Gastrocnemius medialis (tissue), 4 donors: ENCODE measurements at regions of chr6 and their contacts with region 1.

Region 1: GRCh38 chr6:26285143-26286134 is 79.6 kb upstream of the BTN3A2 start:
- DNase-seq: peak; percentile 96
- ATAC-seq: peak; percentile 91 to 92
- H3K4me3 ChIP-seq: peak overlapping the region; percentile 50 to 84 (median 73)
- H3K27ac ChIP-seq: peak overlapping the region; percentile 91 to 92 (median 92)
- H3K4me1 ChIP-seq: peaks cover 17 to 28% of the 10 kb centered on the region in 2 donors
- H3K27me3 ChIP-seq: no peaks in the 10 kb centered on the region
- CTCF ChIP-seq: no peak
- POLR2A ChIP-seq: peak; percentile 66 to 72

Region 2: GRCh38 chr6:26054857-26055669 is 230.4 kb before region 1 on chr6:
- in situ Hi-C with region 1: no loop called
- intact Hi-C with region 1: loop called (anchors 2 kb)
- DNase-seq: peak; percentile 84 to 86
- ATAC-seq: peak; percentile 76 to 80
- H3K4me3 ChIP-seq: peak overlapping the region; percentile 73 to 87 (median 82)
- H3K27ac ChIP-seq: peak overlapping the region; percentile 87 to 96 (median 90)
- H3K4me1 ChIP-seq: peaks cover 11 to 15% of the 10 kb centered on the region in 2 donors
- H3K27me3 ChIP-seq: no peaks in the 10 kb centered on the region
- CTCF ChIP-seq: peak in 2 of 5 experiments; percentile 14 to 29
- POLR2A ChIP-seq: peak in 1 of 2 donors; percentile 21

Region 3: GRCh38 chr6:26156076-26156849 is 129.2 kb before region 1 on chr6:
- in situ Hi-C with region 1: no loop called
- intact Hi-C with region 1: loop called (anchors 1 kb)
- DNase-seq: peak; percentile 81 to 89
- ATAC-seq: peak; percentile 70 to 76
- H3K4me3 ChIP-seq: peak overlapping the region; percentile 71 to 95 (median 77)
- H3K27ac ChIP-seq: peak overlapping the region; percentile 88 to 97 (median 93)
- H3K4me1 ChIP-seq: peaks cover 11 to 23% of the 10 kb centered on the region in 2 donors
- H3K27me3 ChIP-seq: no peaks in the 10 kb centered on the region
- CTCF ChIP-seq: no peak
- POLR2A ChIP-seq: peak; percentile 99

Region 4: DNA sequence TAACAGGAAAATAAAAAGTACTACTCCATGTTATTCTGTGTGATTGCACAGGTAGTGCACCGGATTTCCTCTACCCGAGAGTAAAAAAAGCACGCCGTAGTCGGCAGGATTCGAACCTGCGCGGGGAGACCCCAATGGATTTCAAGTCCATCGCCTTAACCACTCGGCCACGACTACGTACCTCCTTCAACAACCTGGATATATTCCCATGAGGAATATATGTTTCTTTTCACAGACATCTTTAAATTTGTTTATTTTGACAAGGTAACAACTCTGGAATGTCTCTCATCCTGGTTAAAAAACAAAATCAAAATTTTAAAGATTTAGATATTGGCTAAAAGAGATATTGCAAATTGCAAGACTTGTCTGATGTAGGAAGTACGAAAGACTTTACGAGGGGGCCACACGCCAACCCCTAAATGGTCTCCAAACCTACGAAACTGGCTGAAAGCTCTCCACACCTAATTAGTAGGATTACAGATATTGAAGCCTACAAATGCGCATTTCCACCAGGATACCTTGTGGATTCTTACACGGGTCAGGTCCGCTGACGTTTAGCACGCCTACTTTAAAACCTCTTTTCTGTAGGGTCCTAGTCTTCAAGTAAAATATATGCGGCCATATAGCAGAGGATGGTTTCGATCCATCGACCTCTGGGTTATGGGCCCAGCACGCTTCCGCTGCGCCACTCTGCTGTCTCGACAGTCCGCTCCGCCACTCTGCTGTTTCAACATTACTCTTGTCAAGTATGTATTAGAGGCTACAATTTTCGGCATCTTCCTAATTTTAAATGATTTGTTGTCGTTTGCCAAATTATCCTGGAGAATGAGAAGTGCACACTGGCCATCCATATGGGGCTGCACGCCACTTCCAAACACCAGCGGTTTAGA is 27.3 kb after region 1 on chr6:
- in situ Hi-C with region 1: no loop called
- intact Hi-C with region 1: loop called (anchors 1 kb)
- DNase-seq: peak; percentile 67
- ATAC-seq: peak; percentile 81 to 82
- H3K4me3 ChIP-seq: peak overlapping the region; percentile 54 to 65 (median 54)
- H3K27ac ChIP-seq: peak overlapping the region; percentile 67 to 83 (median 75)
- H3K4me1 ChIP-seq: peaks cover 8 to 10% of the 10 kb centered on the region in 2 donors
- H3K27me3 ChIP-seq: no peaks in the 10 kb centered on the region
- CTCF ChIP-seq: no peak
- POLR2A ChIP-seq: no peak

Region 5: DNA sequence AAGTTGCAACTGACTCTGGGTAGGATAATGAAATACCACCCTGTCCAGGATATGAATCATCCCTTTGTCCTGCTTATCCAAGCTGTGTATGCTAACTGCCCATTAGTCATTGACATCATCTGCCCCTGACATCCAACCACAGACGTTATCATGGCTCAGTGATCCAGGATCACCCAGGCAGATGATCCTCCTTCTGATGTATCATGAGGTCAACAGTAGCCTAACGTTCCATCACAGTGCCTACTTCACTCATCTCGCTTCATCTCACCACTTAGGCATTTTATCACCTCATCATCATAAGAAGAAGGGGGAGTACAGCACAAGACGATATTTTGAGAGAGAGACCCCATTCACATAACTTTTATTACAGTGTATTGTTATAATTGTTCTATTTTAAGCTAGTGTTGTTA is 66.1 kb after region 1 on chr6:
- in situ Hi-C with region 1: no loop called
- intact Hi-C with region 1: no loop called
- DNase-seq: no peak
- ATAC-seq: no peak
- H3K4me3 ChIP-seq: no peak overlapping the region
- H3K27ac ChIP-seq: no peak overlapping the region
- H3K4me1 ChIP-seq: no peaks in the 10 kb centered on the region
- H3K27me3 ChIP-seq: no peaks in the 10 kb centered on the region
- CTCF ChIP-seq: no peak
- POLR2A ChIP-seq: no peak

Region 6: GRCh38 chr6:26537846-26538571 is 252.6 kb after region 1 on chr6 and contains the start of gene HMGN4:
- in situ Hi-C with region 1: no loop called
- intact Hi-C with region 1: loop called (anchors 2 kb)
- DNase-seq: peak; percentile 58 to 72
- ATAC-seq: peak; percentile 68 to 85
- H3K4me3 ChIP-seq: peak within 1 kb of the TSS; percentile 75 to 89 (median 89)
- H3K27ac ChIP-seq: peak within 1 kb of the TSS; percentile 89 to 95 (median 92)
- H3K4me1 ChIP-seq: peaks cover 39 to 41% of the 10 kb centered on the region in 2 donors
- H3K27me3 ChIP-seq: no peaks in the 10 kb centered on the region
- CTCF ChIP-seq: no peak
- POLR2A ChIP-seq: peak; percentile 47 to 62
- total RNA-seq, gene HMGN4: 20.1 to 58.7 (median 28.4) TPM

Region 7: DNA sequence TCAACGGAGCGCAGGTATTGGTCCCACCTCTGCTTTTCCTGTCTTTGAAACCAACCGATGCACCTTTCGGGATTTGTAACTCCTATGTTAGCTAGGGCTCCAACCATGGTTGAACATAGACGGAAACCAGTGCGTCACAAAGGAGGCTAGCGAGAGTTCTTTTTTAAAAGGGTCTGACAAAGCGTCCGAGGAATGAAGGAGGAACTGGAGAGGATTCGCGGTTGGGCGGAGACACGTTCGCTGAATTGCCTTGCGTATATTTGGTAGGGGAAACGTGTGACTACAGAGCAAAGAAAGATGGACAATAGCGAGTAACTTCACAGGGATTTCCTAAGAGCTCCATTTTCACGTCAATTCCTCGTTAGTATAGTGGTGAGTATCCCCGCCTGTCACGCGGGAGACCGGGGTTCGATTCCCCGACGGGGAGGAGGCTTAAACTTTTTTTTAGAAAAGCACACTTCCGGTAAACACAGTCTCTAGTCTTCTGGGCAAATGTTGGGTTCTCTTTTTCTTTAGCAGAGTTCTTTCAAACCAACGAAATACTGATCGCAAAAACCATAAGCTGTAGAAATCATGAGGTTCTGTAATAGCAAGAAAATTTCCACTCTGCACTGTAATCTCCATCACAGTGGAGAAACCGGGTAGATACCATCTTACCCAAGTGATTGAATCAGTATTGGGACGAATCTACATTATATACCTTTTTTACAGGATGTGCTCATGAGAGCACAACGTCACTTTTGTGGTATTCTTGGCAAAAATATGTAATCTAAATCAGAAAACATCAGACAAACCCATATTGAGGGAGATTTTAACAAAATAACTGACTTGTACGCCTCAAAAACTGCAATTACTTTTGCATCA is 1194.1 kb after region 1 on chr6:
- in situ Hi-C with region 1: no loop called
- intact Hi-C with region 1: loop called (anchors 2 kb)
- DNase-seq: peak; percentile 49 to 53
- ATAC-seq: peak; percentile 87 to 89
- H3K4me3 ChIP-seq: peak overlapping the region; percentile 71 to 87 (median 80)
- H3K27ac ChIP-seq: peak overlapping the region; percentile 89 to 94 (median 90)
- H3K4me1 ChIP-seq: peaks cover 0 to 11% of the 10 kb centered on the region in 2 donors
- H3K27me3 ChIP-seq: no peaks in the 10 kb centered on the region
- CTCF ChIP-seq: no peak
- POLR2A ChIP-seq: peak; percentile 23 to 36